Activated CD4-positive, alpha-beta memory T cell treated with anti-CD3 and anti-CD28 coated beads for 36 hours (primary cell): ENCODE measurements at regions of chr7 and their contacts with region 1.

Region 1: GRCh38 chr7:10939911-10940703 is 33.6 kb upstream of the PHF14 start:
- DNase-seq: peak; percentile 91
- H3K4me3 Mint-ChIP-seq: no peak overlapping the region
- H3K27ac Mint-ChIP-seq: no peak overlapping the region
- H3K4me1 Mint-ChIP-seq: peaks cover 34% of the 10 kb centered on the region
- H3K27me3 Mint-ChIP-seq: no peaks in the 10 kb centered on the region

Region 2: GRCh38 chr7:10913457-10913856 is 26.6 kb before region 1 on chr7:
- CTCF ChIA-PET with region 1: no interaction called
- POLR2A ChIA-PET with region 1: no interaction called
- intact Hi-C with region 1: no loop called
- DNase-seq: no peak
- H3K4me3 Mint-ChIP-seq: no peak overlapping the region
- H3K27ac Mint-ChIP-seq: no peak overlapping the region
- H3K4me1 Mint-ChIP-seq: no peaks in the 10 kb centered on the region
- H3K27me3 Mint-ChIP-seq: peaks cover 7% of the 10 kb centered on the region

Region 3: GRCh38 chr7:10973061-10973944 is 33.2 kb after region 1 on chr7 and contains the start of gene PHF14:
- CTCF ChIA-PET with region 1: interaction called, 4 read pairs
- POLR2A ChIA-PET with region 1: interaction called, 33 read pairs
- intact Hi-C with region 1: loop called (anchors 1 kb)
- DNase-seq: peak; percentile 98
- H3K4me3 Mint-ChIP-seq: peak within 1 kb of the TSS; percentile 91
- H3K27ac Mint-ChIP-seq: peak within 1 kb of the TSS; percentile 90
- H3K4me1 Mint-ChIP-seq: peaks cover 37% of the 10 kb centered on the region
- H3K27me3 Mint-ChIP-seq: peaks cover 8% of the 10 kb centered on the region
- total RNA-seq, gene PHF14: 28.6 to 31.5 TPM

Region 4: DNA sequence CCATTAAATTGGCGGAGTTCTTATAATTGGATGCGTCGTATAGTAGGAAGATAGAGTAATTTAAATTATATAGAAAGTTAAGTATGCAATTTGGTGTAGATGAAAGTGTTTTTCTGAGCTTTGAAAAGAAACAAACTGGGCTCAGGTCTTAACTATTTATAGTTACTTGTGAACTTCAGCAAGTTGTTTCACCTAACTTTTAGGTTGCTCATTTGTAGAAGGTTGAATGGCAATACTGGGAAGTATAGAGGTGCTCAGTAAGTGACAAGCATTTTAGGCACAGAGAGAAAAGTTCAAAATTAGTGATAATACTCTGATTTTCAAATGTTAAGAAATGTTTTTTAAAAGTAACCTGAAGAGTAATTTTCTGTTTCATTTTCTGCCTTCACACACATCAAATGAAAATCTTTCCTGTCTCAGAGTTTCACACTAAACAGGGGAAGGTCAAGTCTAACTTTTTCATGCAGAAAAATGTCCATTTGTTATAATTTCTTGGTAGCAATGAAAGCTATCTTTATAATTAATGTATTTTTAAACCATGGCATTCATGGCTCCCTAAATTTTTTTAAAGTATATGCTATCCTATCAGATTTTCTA is 180.1 kb after region 1 on chr7:
- CTCF ChIA-PET with region 1: no interaction called
- POLR2A ChIA-PET with region 1: no interaction called
- intact Hi-C with region 1: loop called (anchors 2 kb)
- DNase-seq: no peak
- H3K4me3 Mint-ChIP-seq: no peak overlapping the region
- H3K27ac Mint-ChIP-seq: peak overlapping the region; percentile 46
- H3K4me1 Mint-ChIP-seq: peaks cover 19% of the 10 kb centered on the region
- H3K27me3 Mint-ChIP-seq: no peaks in the 10 kb centered on the region

Region 5: GRCh38 chr7:11212080-11212711 is 272.1 kb after region 1 on chr7:
- CTCF ChIA-PET with region 1: interaction called, 7 read pairs
- POLR2A ChIA-PET with region 1: no interaction called
- intact Hi-C with region 1: loop called (anchors 1 kb)
- DNase-seq: peak; percentile 52
- H3K4me3 Mint-ChIP-seq: no peak overlapping the region
- H3K27ac Mint-ChIP-seq: no peak overlapping the region
- H3K4me1 Mint-ChIP-seq: peaks cover 2% of the 10 kb centered on the region
- H3K27me3 Mint-ChIP-seq: peaks cover 6% of the 10 kb centered on the region